GM23248 (cell line): ENCODE measurements at regions of chr6 and their contacts with region 1.

Region 1: DNA sequence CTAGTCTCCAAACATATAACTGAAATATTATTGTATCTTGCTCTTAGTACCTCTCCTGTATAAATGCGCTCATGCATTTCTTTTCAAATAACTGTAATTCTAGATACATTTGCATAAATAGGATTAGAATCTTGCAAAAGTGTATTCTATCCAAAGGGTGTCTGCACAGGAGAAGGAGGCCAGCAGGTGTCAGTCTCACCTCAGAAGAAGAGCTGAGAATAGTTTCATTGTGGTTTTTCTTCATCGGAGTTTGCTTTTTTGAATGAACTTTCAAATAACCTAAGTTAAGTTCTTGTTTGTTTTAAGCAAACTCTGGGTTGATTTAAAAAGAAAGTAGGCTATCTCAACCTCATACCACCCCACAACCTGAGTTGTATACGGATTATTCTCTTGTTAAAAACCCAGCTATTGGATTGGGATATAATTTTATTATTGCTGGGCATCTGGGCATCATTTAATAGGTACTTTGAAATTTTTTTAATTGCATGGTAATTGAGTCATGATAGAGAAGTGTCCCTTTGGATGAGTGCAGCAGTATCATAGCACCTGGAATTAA is 125.0 kb upstream of the MLIP start:
- DNase-seq: peak; percentile 73
- H3K4me3 ChIP-seq: no peak overlapping the region
- H3K27ac ChIP-seq: no peak overlapping the region
- H3K4me1 ChIP-seq: peaks cover 49% of the 10 kb centered on the region
- H3K27me3 ChIP-seq: no peaks in the 10 kb centered on the region

Region 2: GRCh38 chr6:54112151-54112650 is 126.0 kb after region 1 on chr6:
- in situ Hi-C with region 1: no loop called
- DNase-seq: peak; percentile 9
- H3K4me3 ChIP-seq: no peak overlapping the region
- H3K27ac ChIP-seq: no peak overlapping the region
- H3K4me1 ChIP-seq: peaks cover 7% of the 10 kb centered on the region
- H3K27me3 ChIP-seq: 0 out of 2 replicates have a peak, but pooled peaks cover 3% of the 10 kb centered on the region

Region 3: DNA sequence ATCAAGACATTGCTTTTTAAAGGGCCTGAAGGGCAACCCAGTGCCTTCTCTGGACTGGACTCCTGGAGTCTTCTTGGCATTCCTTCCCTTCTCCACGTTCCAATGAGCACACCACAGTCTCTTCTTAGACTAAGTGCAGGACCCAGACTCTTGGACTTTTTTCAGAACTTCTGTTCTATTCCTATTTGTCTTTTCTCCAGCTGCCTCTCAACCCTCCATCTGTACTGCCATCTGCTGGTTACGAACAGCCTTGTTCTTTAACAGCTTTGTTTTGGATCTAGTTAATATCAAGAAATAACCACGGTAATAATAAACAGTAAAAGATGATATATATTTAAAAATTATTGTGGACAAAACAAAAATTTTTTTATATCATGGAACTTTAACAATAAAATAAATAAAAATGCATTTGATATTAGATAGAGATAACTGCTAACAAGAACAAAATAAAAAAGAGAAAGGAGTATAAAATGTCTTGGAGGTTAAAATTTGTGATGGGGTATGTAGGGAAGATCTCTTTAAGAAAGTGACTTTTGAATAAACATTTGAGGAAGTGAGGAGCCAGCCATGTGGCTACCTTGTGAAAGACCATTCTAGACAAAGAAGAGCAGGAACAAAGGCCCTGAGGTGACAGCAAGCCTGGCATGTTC is 1083.0 kb after region 1 on chr6:
- in situ Hi-C with region 1: loop called (anchors 10 kb)
- DNase-seq: peak; percentile 72
- H3K4me3 ChIP-seq: no peak overlapping the region
- H3K27ac ChIP-seq: no peak overlapping the region
- H3K4me1 ChIP-seq: no peaks in the 10 kb centered on the region
- H3K27me3 ChIP-seq: no peaks in the 10 kb centered on the region; the same call in 1 of the 2 replicates

Region 4: GRCh38 chr6:55239099-55239498 is 1252.9 kb after region 1 on chr6:
- in situ Hi-C with region 1: loop called (anchors 25 kb)
- DNase-seq: no peak
- H3K4me3 ChIP-seq: no peak overlapping the region
- H3K27ac ChIP-seq: no peak overlapping the region
- H3K4me1 ChIP-seq: no peaks in the 10 kb centered on the region
- H3K27me3 ChIP-seq: 0 out of 2 replicates have a peak, but pooled peaks cover 6% of the 10 kb centered on the region